Posterior vena cava (tissue), 2 donors: ENCODE measurements at regions of chr17 and their contacts with region 1.

Region 1: GRCh38 chr17:76820039-76820438 is 48.2 kb upstream of the MGAT5B start:
- DNase-seq: no peak

Region 2: DNA sequence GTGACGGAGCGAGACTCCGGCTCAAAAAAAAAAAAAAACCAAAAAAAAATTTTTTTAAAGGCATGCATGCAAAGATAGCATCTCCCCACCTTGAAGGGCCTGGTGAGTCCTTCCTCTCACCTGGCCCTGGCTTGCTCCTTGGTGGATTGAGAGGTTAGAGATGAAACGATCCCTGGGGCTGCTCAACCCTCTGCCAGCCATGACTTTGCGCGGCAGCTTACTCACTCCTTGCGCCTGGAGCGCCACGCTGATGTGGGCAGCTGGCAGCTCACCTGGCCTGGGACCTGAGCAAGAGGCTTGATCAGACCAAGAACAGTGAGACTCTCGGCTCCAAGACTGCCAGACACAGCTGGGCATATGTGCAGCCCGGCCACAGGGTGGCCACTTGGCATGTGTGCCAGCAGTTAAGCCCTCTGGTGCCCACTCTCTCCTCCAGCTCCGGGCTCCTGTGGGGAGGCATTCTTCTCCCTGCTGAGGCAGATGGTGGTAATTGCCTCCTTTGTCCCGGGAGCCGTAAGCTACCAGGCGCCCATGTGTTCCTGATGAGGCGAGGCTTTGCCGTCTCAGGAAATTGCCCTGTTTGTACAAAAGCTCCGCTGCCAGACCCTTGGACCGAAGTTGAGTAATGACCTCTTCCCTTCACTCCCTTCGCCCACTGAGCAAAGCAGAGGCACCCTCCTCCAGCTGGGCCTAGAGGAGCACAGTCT is 787.8 kb before region 1 on chr17:
- intact Hi-C with region 1: loop called in 1 of 2 experiments (anchors 5 kb)
- DNase-seq: no peak